ENCODE measurements at regions of chr3 and their contacts with region 1.

Region 1: DNA sequence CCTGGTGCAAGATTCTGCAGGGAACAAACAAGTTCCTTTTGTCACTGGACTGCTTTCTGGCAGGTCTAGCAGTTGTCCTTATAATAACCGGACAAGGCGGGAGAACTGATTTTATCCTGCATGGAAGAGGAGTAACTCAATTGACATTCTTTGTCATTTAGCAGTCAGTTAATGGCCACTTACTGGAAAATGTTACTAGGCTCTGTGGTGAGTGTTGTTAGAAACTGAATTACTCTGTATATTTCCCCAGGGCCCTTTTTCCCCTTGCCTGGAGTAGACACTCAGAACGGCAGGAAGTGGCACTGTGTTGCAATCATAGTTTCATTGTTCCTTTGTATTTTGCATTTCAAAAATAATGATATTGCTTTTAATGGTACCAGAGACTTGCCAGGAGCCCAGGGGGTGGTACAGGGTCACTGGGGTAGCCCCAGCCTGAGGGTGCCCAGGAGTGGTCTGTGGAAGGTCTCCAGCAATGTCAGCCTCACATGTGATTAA is 318.6 kb upstream of the LRRFIP2 start:
- DNase-seq: peak in 2 of 3 donors; percentile 28 to 58
- ATAC-seq: peak; percentile 88 to 90
- H3K4me3 ChIP-seq: no peak overlapping the region
- H3K27ac ChIP-seq: peak overlapping the region; percentile 40
- H3K4me1 ChIP-seq: peaks cover 19% of the 10 kb centered on the region
- H3K27me3 ChIP-seq: no peaks in the 10 kb centered on the region

Region 2: GRCh38 chr3:36095238-36095637 is 1397.8 kb before region 1 on chr3:
- intact Hi-C with region 1: no loop called
- DNase-seq: no peak
- ATAC-seq: no peak
- H3K4me3 ChIP-seq: no peak overlapping the region
- H3K27ac ChIP-seq: no peak overlapping the region
- H3K4me1 ChIP-seq: no peaks in the 10 kb centered on the region
- H3K27me3 ChIP-seq: no peaks in the 10 kb centered on the region

Region 3: GRCh38 chr3:37456270-37456708 is 36.7 kb before region 1 on chr3:
- intact Hi-C with region 1: loop called in 1 of 4 experiments (anchors 5 kb)
- DNase-seq: peak; percentile 90 to 94 (median 92)
- ATAC-seq: peak; percentile 81 to 83
- H3K4me3 ChIP-seq: no peak overlapping the region
- H3K27ac ChIP-seq: peak overlapping the region; percentile 90
- H3K4me1 ChIP-seq: peaks cover 29% of the 10 kb centered on the region
- H3K27me3 ChIP-seq: no peaks in the 10 kb centered on the region